Activated CD8-positive, alpha-beta memory T cell treated with anti-CD3 and anti-CD28 coated beads, Interleukin-2, amount 10 ng/mL, durations not matched to agents 7 days and 5 days (primary cell): ENCODE measurements at regions of chr11 and their contacts with region 1.

Region 1: DNA sequence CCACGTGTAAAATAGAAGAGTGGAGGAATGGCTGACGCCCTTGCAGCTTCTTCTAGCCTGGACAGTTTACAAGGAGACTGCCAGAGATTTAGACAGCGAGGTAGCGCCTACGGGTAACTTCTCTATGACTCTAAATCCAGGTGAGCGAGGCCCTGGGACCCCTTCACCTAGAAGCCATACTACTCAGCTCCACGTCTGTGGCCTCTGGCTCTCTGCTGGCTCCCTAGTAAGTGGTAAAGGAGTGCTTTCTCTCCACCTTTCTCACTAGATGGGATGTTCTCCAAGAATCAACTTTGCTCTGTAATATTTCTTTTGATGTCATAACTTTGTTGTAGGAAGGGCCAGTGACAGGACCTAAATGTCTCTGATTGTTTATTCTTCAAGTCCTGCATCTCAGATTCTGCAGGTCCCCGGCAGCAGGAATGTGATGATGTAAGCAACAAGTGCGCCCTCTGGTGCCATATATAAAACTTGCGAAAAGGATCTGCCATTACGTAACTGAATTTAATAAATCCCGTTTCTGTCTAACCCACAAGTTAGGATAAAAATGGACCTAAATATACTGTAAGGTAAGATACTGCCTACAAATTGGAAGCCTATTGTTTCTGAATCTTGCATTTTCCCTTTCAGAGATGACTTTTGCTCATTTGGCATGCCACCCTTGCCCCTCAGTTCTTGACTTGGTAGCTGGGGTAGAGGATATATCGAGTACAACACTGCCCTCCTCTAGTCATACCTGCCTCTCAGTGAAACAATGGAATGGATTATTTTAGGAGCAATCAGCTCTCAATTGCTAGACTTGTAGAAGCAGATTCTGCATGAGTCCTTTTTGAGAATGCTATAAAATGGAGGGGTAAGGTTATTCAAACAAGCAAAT is 11.0 kb upstream of the PTPN5 start:
- DNase-seq: peak; percentile 60
- ATAC-seq: no peak
- H3K4me3 Mint-ChIP-seq: no peak overlapping the region
- H3K27ac Mint-ChIP-seq: no peak overlapping the region
- H3K4me1 Mint-ChIP-seq: peaks cover 7% of the 10 kb centered on the region
- H3K27me3 Mint-ChIP-seq: peaks cover 55% of the 10 kb centered on the region

Region 2: DNA sequence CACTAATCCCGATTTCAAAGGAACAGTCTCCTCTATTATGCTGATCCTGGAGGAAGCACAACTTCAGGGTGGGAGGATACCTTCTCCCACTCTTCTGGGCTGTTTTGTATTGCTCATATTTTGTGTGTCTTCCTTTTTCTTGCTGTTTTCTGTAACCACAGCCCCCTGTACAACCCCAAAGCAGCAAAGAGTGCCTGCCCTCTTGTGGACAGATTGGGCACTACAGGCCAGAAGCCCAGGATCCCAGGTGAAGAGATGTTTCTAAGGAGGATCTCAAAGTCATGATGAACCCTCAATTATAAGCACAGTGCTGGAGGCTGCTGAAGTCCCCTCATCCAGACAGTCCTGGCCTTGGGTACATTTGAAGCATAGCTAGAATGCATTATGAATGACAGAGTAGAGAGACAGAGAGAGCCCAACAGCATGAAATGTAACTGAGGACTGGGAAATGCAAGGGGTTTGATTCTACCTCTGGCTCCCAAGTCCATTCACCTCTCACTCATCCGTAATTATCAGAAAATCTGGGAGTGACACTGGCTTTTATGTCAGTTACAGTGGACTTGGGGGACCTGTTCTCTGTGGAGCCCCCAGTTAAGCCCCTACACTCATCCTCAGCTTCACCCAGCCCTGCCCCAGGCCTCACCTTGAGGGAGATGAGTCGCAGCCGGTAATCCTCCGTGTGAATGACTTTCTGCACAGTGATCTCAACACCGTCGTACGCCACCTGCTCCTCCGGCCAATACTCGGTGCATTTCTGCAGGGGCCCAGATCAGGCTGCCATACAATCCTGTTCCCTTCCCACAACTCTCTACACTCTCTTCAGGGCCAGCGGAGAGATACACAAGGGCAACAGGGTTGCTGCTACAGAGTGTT is 70.4 kb before region 1 on chr11:
- CTCF ChIA-PET with region 1: no interaction called
- DNase-seq: peak; percentile 72
- ATAC-seq: peak; percentile 77
- H3K4me3 Mint-ChIP-seq: no peak overlapping the region
- H3K27ac Mint-ChIP-seq: no peak overlapping the region
- H3K4me1 Mint-ChIP-seq: peaks cover 5% of the 10 kb centered on the region
- H3K27me3 Mint-ChIP-seq: no peaks in the 10 kb centered on the region

Region 3: GRCh38 chr11:18775492-18776292 is 26.9 kb before region 1 on chr11:
- CTCF ChIA-PET with region 1: interaction called, 22 read pairs
- DNase-seq: peak; percentile 81
- ATAC-seq: peak; percentile 71
- H3K4me3 Mint-ChIP-seq: no peak overlapping the region
- H3K27ac Mint-ChIP-seq: no peak overlapping the region
- H3K4me1 Mint-ChIP-seq: peaks cover 37% of the 10 kb centered on the region
- H3K27me3 Mint-ChIP-seq: peaks cover 2% of the 10 kb centered on the region